Ascending aorta (tissue), 2 donors: ENCODE measurements at regions of chr17 and their contacts with region 1.

Region 1: DNA sequence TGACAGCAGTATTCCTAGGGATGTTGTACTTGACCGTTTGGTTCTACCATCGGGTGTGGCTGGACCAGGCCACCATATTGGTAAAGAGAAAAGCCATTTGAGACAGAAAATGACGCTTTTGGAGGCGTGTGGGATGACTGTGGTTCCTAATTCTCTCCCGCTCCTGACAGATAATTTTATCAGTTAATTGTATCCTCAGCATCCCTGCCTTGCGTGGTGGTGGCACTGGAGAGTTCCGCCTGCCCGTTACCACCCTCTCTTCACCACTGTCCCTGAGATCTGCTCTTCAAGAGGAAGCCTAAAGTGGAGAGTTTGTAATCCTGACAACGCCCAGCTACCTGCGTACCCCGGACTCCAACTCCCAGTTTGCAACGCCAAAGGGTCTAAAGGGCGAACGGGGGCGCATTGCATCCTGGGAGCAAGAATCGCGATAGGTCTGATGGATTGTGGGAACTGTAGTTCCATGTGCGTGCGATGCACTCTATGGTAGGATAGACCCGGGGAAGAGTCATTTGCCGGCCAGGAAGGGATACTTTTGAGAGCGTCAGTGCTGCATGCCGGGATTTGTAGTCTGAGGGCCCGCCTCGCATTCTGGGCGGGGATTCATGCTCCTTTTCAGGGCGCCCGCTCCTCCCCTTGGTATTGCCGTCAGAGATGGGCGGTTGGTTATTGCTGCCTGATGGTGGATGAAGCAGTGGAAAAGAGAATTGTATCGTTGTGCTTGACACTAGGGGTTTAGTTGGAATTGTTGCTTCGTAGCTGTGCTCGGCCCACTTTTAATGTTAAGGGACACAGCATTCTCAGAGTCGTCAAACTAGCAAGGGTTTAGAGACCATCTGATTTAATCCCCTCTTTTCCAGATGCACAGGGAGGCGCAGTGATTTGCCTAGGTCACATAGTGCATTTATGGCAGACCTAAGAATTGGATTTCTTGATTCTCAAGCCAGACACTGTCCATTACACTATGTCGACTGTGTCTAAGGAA is 965 bp upstream of the PHF12 start:
- DNase-seq: peak; percentile 98 to 99
- H3K4me3 ChIP-seq: peak overlapping the region; percentile 47 to 71
- H3K27ac ChIP-seq: peak overlapping the region; percentile 93 to 95
- H3K4me1 ChIP-seq: peaks cover 2 to 13% of the 10 kb centered on the region in 2 donors
- H3K27me3 ChIP-seq: no peaks in the 10 kb centered on the region
- CTCF ChIP-seq: no peak

Region 2: DNA sequence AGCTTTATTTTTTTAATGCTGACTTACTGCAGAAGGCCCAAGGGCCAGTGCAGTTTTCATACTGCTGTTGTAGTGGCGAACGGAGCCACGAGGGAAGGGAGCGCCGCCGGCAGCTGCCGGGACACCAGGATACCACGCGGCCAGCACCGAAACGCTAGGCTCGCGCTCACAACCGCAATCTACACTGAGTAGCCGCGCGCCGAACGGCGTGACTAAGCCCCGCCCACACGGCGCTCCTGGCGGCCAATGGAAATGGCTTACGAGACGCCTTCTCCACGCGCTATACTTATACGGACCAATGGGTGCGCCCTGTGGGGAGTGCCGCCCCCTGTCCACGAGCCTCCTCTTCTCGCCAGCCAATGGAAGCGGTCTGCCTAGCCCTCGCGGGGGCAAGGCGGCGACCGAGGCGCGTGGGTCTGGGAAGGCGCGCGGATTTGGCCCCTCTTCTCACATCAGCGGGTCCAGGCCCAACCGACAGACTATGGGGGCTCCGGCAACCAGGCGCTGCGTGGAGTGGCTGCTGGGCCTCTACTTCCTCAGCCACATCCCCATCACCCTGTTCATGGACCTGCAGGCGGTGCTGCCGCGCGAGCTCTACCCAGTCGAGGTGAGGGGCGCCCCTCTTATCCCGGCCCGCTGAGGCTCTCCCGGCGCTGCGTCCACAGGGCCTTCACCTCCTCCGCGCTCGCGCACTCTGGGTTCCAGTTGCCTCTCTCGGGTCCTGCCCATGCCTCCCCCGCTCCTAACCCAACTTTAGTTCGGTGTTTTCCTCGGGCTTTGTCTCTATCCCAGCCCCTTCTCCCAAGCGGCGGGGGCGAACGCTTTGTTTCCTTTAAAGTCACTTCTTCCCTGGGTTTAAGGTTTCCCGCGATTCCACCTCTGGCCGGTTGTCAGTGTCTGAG is 633.3 kb before region 1 on chr17 and contains the start of gene TMEM97:
- intact Hi-C with region 1: loop called (anchors 5 kb)
- DNase-seq: peak; percentile 87 to 97
- H3K4me3 ChIP-seq: peak within 1 kb of the TSS; percentile 67 to 72
- H3K27ac ChIP-seq: peak within 1 kb of the TSS; percentile 12 to 51
- H3K4me1 ChIP-seq: peaks cover 5 to 13% of the 10 kb centered on the region in 2 donors
- H3K27me3 ChIP-seq: no peaks in the 10 kb centered on the region
- CTCF ChIP-seq: no peak
- total RNA-seq, gene TMEM97: not detected

Region 3: DNA sequence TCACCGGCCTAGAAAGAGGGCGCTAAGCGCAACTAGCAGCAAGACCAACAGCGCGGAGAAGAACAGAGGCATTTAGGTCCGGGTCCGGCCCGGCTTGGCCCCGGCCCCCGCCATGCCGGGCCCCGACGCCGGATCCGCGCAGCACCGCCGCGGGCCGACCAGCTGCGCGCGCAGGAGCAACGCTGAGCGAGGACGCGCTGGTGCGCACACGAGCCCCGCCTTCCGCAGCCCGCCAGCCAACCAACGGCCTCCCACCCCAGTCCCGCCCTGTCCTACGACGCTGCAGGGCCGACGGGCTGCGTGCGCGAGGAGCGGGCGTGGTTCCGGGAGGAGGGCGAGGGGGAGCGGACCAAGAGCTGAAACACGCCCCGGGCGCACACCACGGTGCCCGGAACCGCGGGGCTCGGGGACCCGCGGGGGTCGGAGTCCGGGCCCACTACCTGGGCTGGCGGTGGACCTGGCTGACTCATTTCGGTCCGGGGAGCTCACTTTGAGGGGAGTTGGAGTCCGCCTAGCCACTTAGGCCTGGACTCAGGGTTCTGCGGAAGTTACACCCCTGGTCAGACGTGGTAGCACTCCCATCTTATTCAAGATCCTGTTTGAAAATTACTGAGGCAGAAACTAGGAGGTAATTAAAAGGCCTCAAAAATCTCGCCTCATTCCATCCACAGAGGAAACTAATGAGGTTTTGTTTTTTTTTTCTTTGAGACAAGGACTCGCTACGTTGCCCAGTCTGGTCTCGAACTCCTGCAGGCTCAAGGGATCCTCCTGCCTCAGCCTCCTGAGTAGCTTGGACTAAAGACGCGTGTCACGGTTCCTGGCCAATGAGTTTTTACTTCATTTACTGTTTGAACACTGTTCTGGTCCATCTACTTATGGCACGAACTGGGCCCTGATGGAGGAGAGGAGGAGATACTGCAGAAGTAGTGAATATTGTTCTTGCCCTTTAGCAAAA is 307.0 kb before region 1 on chr17 and contains the start of gene BLTP2:
- intact Hi-C with region 1: loop called (anchors 5 kb)
- DNase-seq: peak; percentile 81 to 97
- H3K4me3 ChIP-seq: peak within 1 kb of the TSS; percentile 91 to 95
- H3K27ac ChIP-seq: peak within 1 kb of the TSS; percentile 93 to 94
- H3K4me1 ChIP-seq: peaks cover 5 to 27% of the 10 kb centered on the region in 2 donors
- H3K27me3 ChIP-seq: no peaks in the 10 kb centered on the region
- CTCF ChIP-seq: no peak
- total RNA-seq, gene BLTP2: 104 TPM

Region 4: GRCh38 chr17:28717578-28718333 is 234.5 kb before region 1 on chr17 and contains the start of gene RAB34:
- intact Hi-C with region 1: loop called (anchors 2 kb)
- DNase-seq: peak; percentile 36 to 92
- H3K4me3 ChIP-seq: peak within 1 kb of the TSS; percentile 82 to 85
- H3K27ac ChIP-seq: peak within 1 kb of the TSS; percentile 98
- H3K4me1 ChIP-seq: peaks cover 11 to 40% of the 10 kb centered on the region in 2 donors
- H3K27me3 ChIP-seq: no peaks in the 10 kb centered on the region
- CTCF ChIP-seq: peak in 2 of 3 experiments; percentile 27 to 52
- total RNA-seq, gene RAB34: 172 TPM

Region 5: GRCh38 chr17:28812091-28812747 is 140.1 kb before region 1 on chr17:
- intact Hi-C with region 1: loop called (anchors 2 kb)
- DNase-seq: peak; percentile 93 to 98
- H3K4me3 ChIP-seq: peak overlapping the region; percentile 74 to 90
- H3K27ac ChIP-seq: peak overlapping the region; percentile 90
- H3K4me1 ChIP-seq: peaks cover 0 to 43% of the 10 kb centered on the region in 2 donors
- H3K27me3 ChIP-seq: no peaks in the 10 kb centered on the region
- CTCF ChIP-seq: no peak

Region 6: DNA sequence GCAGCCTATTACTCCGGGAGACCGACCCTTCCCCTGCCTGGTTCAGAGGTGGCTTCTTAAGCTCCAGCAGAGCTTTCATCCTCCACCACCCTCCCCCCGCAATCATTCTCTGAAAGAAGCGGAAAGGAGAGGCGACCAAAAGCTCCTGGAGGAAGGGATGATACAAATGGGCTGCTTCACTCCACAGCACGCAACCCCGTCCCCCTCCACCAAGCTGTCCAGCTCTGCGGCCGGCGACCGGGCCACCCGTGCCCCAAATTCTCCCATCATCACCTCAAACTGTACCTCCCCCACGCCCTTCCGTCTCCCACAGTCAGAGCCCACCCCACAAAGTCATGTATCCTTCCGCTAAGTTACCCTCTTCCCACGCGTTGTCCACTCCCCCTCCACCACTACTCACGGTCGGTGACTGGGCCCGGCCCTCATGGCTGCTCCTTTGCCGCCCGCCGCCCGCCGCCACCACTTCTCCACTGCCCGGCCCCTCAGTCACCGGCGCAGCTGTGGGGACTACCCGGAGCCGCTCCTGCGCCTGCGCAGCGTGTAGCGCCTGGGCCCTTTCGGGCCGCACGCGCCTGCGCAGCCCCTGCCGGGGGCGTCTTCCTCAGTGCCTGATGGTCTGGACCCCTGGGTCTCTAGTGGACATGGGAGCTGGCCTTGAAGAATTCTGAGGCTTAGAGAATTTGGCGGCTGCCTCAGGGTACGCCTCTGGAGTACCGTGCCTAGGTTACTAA is 109.8 kb before region 1 on chr17 and contains the start of gene FAM222B:
- intact Hi-C with region 1: loop called (anchors 5 kb)
- DNase-seq: peak; percentile 39 to 89
- H3K4me3 ChIP-seq: peak within 1 kb of the TSS; percentile 69 to 70
- H3K27ac ChIP-seq: peak within 1 kb of the TSS; percentile 71 to 76
- H3K4me1 ChIP-seq: peaks cover 0 to 9% of the 10 kb centered on the region in 2 donors
- H3K27me3 ChIP-seq: no peaks in the 10 kb centered on the region
- CTCF ChIP-seq: peak in 1 of 3 experiments; percentile 7
- total RNA-seq, gene FAM222B: 30.7 TPM

Region 7: DNA sequence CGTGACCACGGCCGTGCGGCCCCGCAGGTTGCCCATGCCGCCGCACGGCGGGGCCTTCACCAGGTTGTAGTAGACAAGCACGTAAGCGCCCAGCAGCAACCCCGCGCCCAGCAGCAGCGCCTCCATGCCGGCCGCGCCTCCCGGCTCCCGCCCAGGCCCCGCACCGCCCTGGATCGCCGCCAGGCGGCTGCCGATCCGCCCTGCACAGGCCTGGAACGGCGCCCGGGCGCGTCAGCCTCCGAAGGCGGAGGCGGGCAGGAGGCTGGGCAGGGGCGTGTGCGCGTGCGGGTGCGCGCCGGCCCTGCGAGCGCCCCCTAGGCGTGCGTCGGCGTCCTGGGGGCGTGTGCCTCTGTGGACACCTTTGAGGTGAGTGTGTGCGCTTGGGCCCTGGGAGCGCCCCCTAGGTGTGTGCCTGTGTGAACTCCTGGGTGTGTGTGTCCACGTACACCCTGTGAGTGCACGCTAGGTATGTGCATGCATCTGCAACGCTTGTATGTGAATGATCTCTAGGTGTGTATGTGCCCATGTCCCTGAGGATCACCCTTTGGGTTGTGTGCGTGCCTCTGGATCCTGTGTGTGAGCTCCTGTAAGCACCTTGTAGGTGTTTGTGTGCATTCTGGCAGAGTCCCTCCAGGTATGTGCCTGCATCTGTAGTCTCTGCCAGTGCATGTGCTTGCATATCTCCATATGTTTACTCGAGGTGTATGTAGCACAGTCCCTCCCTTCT is 49.3 kb before region 1 on chr17 and contains the start of gene DHRS13:
- intact Hi-C with region 1: loop called (anchors 2 kb)
- DNase-seq: peak; percentile 49 to 92
- H3K4me3 ChIP-seq: peak within 1 kb of the TSS; percentile 92
- H3K27ac ChIP-seq: peak within 1 kb of the TSS; percentile 76 to 83
- H3K4me1 ChIP-seq: peaks cover 0 to 13% of the 10 kb centered on the region in 2 donors
- H3K27me3 ChIP-seq: no peaks in the 10 kb centered on the region
- CTCF ChIP-seq: peak; percentile 70 to 88 (median 75)
- total RNA-seq, gene DHRS13: 16.5 TPM

Region 8: GRCh38 chr17:28916302-28916934 is 35.9 kb before region 1 on chr17:
- intact Hi-C with region 1: no loop called
- DNase-seq: no peak
- H3K4me3 ChIP-seq: no peak overlapping the region
- H3K27ac ChIP-seq: no peak overlapping the region
- H3K4me1 ChIP-seq: no peaks in the 10 kb centered on the region
- H3K27me3 ChIP-seq: no peaks in the 10 kb centered on the region
- CTCF ChIP-seq: peak; percentile 52 to 64 (median 62)